SK-MEL-5 (cell line): ENCODE measurements at regions of chr14 and their contacts with region 1.

Region 1: DNA sequence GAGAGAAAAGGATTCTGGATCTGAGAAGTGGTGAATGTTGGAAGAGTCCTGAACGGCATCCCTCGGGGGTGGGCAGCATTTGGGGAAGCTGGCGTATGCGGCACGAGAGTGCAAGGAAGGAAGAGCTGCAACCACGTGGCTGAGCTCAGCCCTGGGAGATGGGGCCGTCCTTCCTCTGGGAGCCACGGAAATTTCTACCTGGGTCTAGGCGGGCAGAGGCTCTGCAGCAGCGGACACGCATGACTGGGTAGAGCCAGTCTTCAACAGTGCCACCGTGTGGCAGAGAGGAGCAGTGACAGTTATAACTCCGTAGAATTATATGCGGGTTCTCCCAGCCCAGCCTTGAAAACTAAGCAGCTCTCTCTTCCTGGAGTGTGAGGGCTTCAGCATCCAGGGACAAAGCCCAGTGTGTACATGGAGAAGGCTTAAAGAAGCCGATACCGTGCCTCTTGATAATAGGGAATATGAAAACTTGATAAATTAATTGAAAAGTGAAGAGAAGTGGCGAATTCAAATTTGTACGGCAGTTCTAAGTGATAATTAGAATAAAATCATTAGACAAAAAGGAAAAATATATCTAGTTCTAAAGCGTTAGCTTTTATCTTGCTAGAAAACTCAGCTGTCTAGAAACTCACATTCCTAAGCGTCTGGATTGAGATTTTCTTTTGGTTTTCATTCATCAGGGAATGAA is 82.9 kb upstream of the STXBP6 start:
- DNase-seq: peak; percentile 80

Region 2: GRCh38 chr14:24734878-24735500 is 397.9 kb before region 1 on chr14:
- in situ Hi-C with region 1: loop called (anchors 25 kb)
- DNase-seq: peak; percentile 82

Region 3: GRCh38 chr14:25381464-25381863 is 248.6 kb after region 1 on chr14:
- in situ Hi-C with region 1: no loop called
- DNase-seq: peak; percentile 86